Activated B cell treated with CpG ODN at 0.5 μM for 24 hours (primary cell): ENCODE measurements at regions of chr7 and their contacts with region 1.

Region 1: GRCh38 chr7:100101016-100101862 is at the starts of genes AP4M1 and MCM7:
- DNase-seq: peak; percentile 92
- ATAC-seq: peak; percentile 86
- H3K4me3 Mint-ChIP-seq: peak within 1 kb of the TSS; percentile 92
- H3K27ac Mint-ChIP-seq: peak within 1 kb of the TSS; percentile 87
- H3K4me1 Mint-ChIP-seq: peaks cover 32% of the 10 kb centered on the region
- H3K27me3 Mint-ChIP-seq: no peaks in the 10 kb centered on the region
- CTCF ChIP-seq: no peak
- total RNA-seq, gene AP4M1: 11.1 and 12.5 TPM in 2 replicates
- total RNA-seq, gene MCM7: 99.7 and 104 TPM in 2 replicates

Region 2: DNA sequence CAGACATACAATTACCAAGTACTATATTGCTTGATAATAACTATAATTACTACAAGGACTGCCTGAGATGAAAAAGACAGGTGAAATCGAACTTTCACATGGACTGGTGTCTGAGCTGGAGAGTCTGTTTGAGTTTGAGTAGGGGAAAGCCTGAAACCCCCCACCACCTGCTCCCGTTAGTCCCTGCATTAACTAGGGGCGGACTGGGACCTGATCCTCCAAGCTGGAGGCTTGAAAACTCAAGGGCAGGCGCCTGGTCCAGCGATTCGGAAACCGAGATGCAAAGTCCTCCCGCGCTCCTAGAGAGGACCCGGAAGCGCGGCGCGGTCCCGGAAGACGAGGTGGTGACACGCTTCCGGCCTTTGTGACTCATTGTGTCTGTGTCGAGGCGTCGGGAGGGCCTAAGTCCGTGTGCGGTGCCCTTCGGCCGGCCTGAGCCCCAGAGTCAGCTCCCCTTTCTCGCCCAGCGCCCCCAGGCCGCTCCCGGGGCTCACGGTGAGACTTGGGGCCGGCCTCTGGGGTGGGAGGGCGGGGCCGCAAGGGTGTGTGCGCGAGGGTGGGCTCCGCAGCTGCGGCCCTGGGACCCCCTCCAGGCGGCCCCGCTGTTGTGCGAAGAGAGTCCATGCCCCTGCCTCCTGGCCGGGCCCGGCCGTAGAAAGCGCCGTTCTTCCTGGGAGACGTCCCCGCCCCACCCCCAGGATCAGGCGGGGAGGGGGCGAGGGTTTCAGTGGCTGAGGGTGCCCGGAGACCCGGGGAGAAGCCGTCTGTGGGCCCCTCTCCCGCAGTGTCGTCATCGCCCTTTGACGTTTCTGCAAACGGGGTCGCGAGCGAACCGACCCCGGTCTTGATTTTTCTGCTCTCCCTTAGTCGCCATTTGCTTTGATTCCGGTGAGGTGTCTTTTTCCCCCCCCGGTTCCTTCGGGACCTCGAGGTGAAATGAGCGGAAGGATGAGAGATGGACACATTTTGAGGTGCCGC is 85.7 kb before region 1 on chr7 and contains the start of gene ZKSCAN1:
- CTCF ChIA-PET with region 1: no interaction called
- POLR2A ChIA-PET with region 1: interaction called, 14 read pairs
- intact Hi-C with region 1: no loop called
- DNase-seq: peak; percentile 76
- ATAC-seq: peak; percentile 97
- H3K4me3 Mint-ChIP-seq: peak within 1 kb of the TSS; percentile 90
- H3K27ac Mint-ChIP-seq: peak within 1 kb of the TSS; percentile 84
- H3K4me1 Mint-ChIP-seq: peaks cover 34% of the 10 kb centered on the region
- H3K27me3 Mint-ChIP-seq: peaks cover 6% of the 10 kb centered on the region
- CTCF ChIP-seq: no peak
- total RNA-seq, gene ZKSCAN1: 59.0 and 70.6 TPM in 2 replicates

Region 3: GRCh38 chr7:100088621-100089457 is 12.4 kb before region 1 on chr7 and contains the start of gene COPS6:
- CTCF ChIA-PET with region 1: interaction called, 4 read pairs
- POLR2A ChIA-PET with region 1: interaction called, 48 read pairs
- intact Hi-C with region 1: loop called (anchors 1 kb)
- DNase-seq: peak; percentile 91
- ATAC-seq: peak; percentile 86
- H3K4me3 Mint-ChIP-seq: peak within 1 kb of the TSS; percentile 89
- H3K27ac Mint-ChIP-seq: peak within 1 kb of the TSS; percentile 84
- H3K4me1 Mint-ChIP-seq: peaks cover 18% of the 10 kb centered on the region
- H3K27me3 Mint-ChIP-seq: no peaks in the 10 kb centered on the region
- CTCF ChIP-seq: no peak
- total RNA-seq, gene COPS6: 88.3 and 108 TPM in 2 replicates

Region 4: DNA sequence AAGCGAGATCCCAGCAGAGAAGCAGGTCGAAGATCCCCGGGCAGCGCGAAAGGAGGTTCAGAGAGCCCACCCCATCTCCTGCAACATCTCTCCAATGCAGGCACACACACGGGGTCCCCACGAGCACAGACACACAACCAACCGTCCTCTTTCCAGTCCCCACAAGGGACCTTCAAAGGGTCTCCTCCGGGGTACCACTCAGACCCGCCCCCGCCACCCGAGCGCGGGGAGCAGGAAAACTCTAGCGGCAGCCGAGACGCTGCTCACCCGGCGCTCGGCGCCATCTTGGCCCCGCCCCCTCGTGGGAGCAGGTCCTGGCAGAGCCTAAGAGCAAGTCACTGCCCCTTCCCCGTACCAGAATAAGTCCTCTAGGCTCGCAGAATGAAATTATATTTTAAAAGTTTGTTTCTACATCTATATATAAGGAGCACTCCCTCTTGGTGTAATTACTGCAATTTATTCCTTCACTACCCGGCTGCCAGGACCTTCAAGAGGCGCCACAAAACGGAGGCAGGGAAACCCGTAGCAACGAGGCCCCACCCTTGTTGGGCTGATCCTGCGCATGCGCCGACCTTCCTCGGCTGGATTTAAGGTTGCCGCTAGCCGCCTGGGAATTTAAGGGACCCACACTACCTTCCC is 17.9 kb after region 1 on chr7 and contains the starts of genes CNPY4 and TAF6:
- CTCF ChIA-PET with region 1: no interaction called
- POLR2A ChIA-PET with region 1: interaction called, 17 read pairs
- intact Hi-C with region 1: loop called (anchors 1 kb)
- DNase-seq: peak; percentile 88
- ATAC-seq: peak; percentile 86
- H3K4me3 Mint-ChIP-seq: peak within 1 kb of the TSS; percentile 98
- H3K27ac Mint-ChIP-seq: peak within 1 kb of the TSS; percentile 99
- H3K4me1 Mint-ChIP-seq: peaks cover 29% of the 10 kb centered on the region
- H3K27me3 Mint-ChIP-seq: no peaks in the 10 kb centered on the region
- CTCF ChIP-seq: no peak
- total RNA-seq, gene CNPY4: 7.1 and 8.6 TPM in 2 replicates
- total RNA-seq, gene TAF6: 42.6 and 54.9 TPM in 2 replicates

Region 5: GRCh38 chr7:100148559-100149350 is 47.5 kb after region 1 on chr7 and contains the start of gene LAMTOR4:
- CTCF ChIA-PET with region 1: no interaction called
- POLR2A ChIA-PET with region 1: interaction called, 15 read pairs
- intact Hi-C with region 1: loop called (anchors 1 kb)
- DNase-seq: peak; percentile 86
- ATAC-seq: peak; percentile 98
- H3K4me3 Mint-ChIP-seq: peak within 1 kb of the TSS; percentile 100
- H3K27ac Mint-ChIP-seq: peak within 1 kb of the TSS; percentile 99
- H3K4me1 Mint-ChIP-seq: peaks cover 46% of the 10 kb centered on the region
- H3K27me3 Mint-ChIP-seq: no peaks in the 10 kb centered on the region
- CTCF ChIP-seq: no peak
- total RNA-seq, gene LAMTOR4: 151 and 161 TPM in 2 replicates